Right lobe of liver (tissue), 6 donors: ENCODE measurements at regions of chr5 and their contacts with region 1.

Region 1: GRCh38 chr5:9498541-9499497 is 47.1 kb downstream of the SEMA5A start:
- DNase-seq: peak in 1 of 3 donors; percentile 57
- ATAC-seq: peak; percentile 61 to 83 (median 80)
- H3K4me3 ChIP-seq: no peak overlapping the region
- H3K27ac ChIP-seq: no peak overlapping the region
- H3K4me1 ChIP-seq: no peaks in the 10 kb centered on the region
- H3K27me3 ChIP-seq: no peaks in the 10 kb centered on the region
- CTCF ChIP-seq: peak; percentile 61 to 67 (median 65)
- POLR2A ChIP-seq: no peak

Region 2: DNA sequence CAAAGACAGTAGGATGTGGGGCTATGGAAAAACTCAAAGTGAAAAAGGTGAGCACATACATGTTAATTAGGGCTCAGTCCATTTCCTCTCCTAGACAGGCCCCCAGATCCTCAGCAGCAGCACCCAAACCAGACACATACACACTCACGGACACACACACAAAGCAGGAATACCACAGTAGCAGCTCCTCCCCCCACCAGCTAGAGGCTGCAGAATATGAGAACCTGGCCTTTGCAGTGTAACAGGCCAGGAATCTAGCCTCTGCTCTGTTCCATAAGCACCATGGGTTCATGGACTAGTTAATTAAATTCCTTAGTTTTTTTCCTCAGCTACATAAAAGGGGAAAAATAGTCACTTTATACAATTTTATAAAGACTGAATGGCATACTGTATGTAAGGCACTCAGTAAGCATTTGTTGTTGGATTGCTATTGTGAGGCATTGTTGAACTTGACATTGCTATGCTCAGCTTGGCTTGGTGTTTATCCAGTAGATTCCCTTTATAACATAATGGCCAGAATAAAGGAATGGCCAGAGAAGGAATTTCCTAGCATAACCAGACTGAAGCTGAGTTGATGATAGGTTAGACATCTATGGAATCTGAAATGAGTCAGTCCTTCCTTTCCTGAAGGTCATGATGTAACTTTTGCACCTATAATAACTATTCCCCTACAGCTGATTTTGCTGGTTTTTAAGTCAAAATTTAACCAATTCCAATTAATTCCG is 139.7 kb before region 1 on chr5:
- intact Hi-C with region 1: loop called in 1 of 2 experiments (anchors 10 kb)
- DNase-seq: no peak
- ATAC-seq: no peak
- H3K4me3 ChIP-seq: no peak overlapping the region
- H3K27ac ChIP-seq: no peak overlapping the region
- H3K4me1 ChIP-seq: peaks cover 0 to 8% (median 0%) of the 10 kb centered on the region in 4 donors
- H3K27me3 ChIP-seq: no peaks in the 10 kb centered on the region
- CTCF ChIP-seq: no peak
- POLR2A ChIP-seq: no peak